ENCODE measurements at regions of chr2 and their contacts with region 1.

Region 1: DNA sequence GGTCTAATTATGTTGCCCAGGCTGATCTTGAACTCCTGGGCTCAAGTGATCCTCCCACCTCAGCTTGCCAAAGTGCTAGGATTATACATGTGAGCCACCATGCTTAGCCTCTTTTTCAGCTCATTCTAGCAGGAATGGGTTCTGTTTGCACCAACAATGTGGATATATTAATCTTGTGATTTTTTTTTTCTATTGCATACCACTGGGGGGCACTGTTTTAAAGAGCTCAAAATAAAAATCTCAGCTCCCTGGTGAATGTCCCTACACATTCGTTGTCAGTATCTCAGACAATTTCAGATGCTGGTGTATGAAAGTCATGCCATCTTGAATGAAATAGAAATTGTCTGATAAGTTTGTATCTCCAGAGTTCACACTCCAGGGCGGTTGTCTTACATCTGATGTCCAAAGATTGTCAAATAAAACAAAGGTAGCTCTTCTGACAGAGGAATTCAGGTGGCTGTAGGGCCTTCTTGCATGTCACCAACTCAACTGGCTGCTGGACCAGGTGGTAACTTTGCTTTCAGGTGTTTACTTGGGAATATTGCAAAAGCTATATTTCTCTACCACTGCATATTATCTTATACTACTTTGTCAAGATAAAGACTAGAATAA is 3.1 kb upstream of the MATN3 start:
- DNase-seq: no peak
- H3K4me3 ChIP-seq: no peak overlapping the region
- H3K27ac ChIP-seq: no peak overlapping the region
- H3K4me1 ChIP-seq: peaks cover 0 to 13% (median 7%) of the 10 kb centered on the region in 4 experiments; a peak in 3 of 7 replicates
- H3K27me3 ChIP-seq: peaks cover 0 to 23% (median 14%) of the 10 kb centered on the region in 4 experiments; a peak in 6 of 7 replicates
- CTCF ChIP-seq: peak in 2 of 3 experiments; percentile 39 to 44; a peak in 2 of 4 replicates
- EP300 ChIP-seq: no peak
- POLR2A ChIP-seq: no peak
- RAD21 ChIP-seq: peak; percentile 37 to 52

Region 2: DNA sequence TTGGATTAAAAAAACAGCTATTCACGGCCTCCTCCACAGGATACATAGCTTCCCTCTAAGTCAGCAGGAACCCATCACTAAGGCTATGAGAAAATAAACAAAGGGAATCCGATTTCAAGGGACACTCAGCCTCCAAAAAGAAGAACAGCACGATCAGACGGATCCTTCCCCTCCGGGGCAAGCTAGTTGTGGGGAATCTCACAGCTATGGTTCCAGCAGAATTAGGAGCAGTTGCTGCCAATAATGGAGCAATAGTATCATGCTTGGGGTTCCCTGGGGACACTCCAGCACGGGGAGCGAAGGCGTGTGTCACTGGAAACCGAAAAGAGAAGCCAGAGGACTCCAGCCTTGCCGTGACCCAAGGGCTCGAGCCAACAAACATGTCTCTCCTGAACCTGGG is 276.9 kb before region 1 on chr2:
- CTCF ChIA-PET with region 1: no interaction called
- POLR2A ChIA-PET with region 1: no interaction called
- DNase-seq: no peak
- H3K4me3 ChIP-seq: no peak overlapping the region
- H3K27ac ChIP-seq: no peak overlapping the region
- H3K4me1 ChIP-seq: no peaks in the 10 kb centered on the region
- H3K27me3 ChIP-seq: no peaks in the 10 kb centered on the region
- CTCF ChIP-seq: no peak
- EP300 ChIP-seq: no peak
- POLR2A ChIP-seq: no peak
- RAD21 ChIP-seq: no peak

Region 3: DNA sequence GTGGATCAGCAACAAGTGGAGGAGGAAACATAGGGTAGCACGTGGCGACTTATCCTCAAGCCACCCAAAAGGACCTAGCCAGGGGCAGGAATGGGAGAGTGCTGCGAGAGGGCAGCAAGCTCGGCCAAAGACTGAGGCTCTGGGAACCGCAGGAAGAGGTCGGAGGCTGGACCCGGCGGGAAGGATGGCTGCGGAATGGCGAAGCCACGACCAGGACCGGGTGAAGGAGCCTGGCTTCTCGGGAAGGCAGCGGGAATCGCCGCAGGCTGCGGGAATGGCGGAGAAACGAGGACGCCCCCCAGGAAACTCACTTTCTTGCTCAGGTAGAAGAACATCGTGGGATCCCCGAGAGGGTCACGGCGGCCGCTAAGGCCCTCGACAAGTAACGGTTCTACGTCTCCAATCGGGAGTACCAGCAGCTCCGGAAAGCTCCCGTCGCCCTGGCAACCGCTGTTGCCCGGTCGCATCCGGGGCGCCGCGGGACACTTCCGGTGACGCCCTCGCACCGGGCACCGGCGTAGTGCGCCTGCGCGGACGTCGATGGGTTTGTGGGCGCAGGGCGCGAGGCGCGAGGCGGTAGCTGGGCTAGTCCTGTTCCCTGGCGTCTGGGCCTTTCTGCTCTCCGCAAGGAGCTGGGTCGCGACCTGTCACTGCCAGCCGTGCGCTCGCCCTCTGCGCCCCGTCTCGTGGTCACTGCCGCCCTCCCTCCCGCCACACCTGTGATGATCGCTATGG is 25.7 kb before region 1 on chr2 and contains the start of gene WDR35:
- CTCF ChIA-PET with region 1: interaction called, 19 read pairs
- POLR2A ChIA-PET with region 1: interaction called, 7 read pairs
- DNase-seq: peak; percentile 75 to 99
- H3K4me3 ChIP-seq: peak within 1 kb of the TSS; percentile 79 to 94 (median 85)
- H3K27ac ChIP-seq: peak within 1 kb of the TSS; percentile 56; the same call in 1 of the 2 replicates
- H3K4me1 ChIP-seq: peaks cover 0 to 2% (median under 1%) of the 10 kb centered on the region in 4 experiments; a peak in 3 of 7 replicates
- H3K27me3 ChIP-seq: no peaks in the 10 kb centered on the region
- CTCF ChIP-seq: no peak
- EP300 ChIP-seq: 0 out of 3 replicates have a peak, but pooled peaks of 1 of the 2 experiments have one; percentile 81
- POLR2A ChIP-seq: peak; percentile 70 to 87
- RAD21 ChIP-seq: 0 out of 4 replicates have a peak, but pooled peaks of 1 of the 2 experiments have one; percentile 1
- total RNA-seq, gene WDR35: 22.6 and 25.5 TPM in 2 replicates

Region 4: GRCh38 chr2:20027705-20028434 is 12.3 kb after region 1 on chr2:
- CTCF ChIA-PET with region 1: interaction called, 51 read pairs
- POLR2A ChIA-PET with region 1: interaction called, 5 read pairs
- DNase-seq: no peak
- H3K4me3 ChIP-seq: no peak overlapping the region
- H3K27ac ChIP-seq: no peak overlapping the region
- H3K4me1 ChIP-seq: no peaks in the 10 kb centered on the region
- H3K27me3 ChIP-seq: no peaks in the 10 kb centered on the region
- CTCF ChIP-seq: no peak
- EP300 ChIP-seq: no peak
- POLR2A ChIP-seq: no peak
- RAD21 ChIP-seq: no peak

Region 5: DNA sequence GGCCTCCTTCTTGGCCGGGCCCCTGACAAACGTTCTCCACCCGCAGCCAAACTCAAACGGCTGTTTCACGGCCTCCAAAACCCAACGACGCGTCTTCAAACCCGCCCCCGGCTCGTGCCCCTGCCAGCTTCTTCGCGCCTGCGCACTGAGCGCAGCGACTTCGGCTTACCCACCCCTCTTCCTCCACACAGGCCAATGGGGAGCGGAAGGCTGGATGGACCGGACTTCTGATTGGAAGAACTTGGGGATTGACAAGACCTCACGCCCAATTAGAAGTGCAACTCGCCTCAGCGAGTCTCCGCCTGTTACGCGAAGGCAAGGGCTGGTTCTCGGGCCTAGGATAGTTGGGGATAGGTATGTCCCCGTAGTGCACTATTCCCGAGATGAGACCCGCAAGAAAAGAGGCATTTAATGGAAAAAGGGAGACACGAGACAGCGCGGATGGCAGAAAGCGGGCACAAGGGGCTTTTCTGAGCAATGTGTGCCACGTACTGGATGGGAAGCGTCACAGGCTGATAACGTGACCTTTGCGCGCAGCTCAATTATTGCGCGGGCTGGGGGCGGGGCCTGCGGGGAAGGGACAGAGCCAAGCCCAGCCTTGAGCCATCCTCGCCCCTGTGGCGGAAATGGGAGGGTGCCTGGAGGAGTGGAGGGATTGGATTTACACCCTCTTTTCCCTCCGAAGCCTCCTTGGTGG is 36.1 kb after region 1 on chr2 and contains the start of gene LAPTM4A:
- CTCF ChIA-PET with region 1: interaction called, 57 read pairs
- POLR2A ChIA-PET with region 1: interaction called, 4 read pairs
- DNase-seq: peak; percentile 96 to 99
- H3K4me3 ChIP-seq: peak within 1 kb of the TSS; percentile 85 to 88 (median 86)
- H3K27ac ChIP-seq: peak within 1 kb of the TSS; percentile 94
- H3K4me1 ChIP-seq: peaks cover 0 to 5% (median 0%) of the 10 kb centered on the region in 4 experiments; a peak in 3 of 7 replicates
- H3K27me3 ChIP-seq: no peaks in the 10 kb centered on the region
- CTCF ChIP-seq: no peak
- EP300 ChIP-seq: no peak
- POLR2A ChIP-seq: peak; percentile 78 to 79
- RAD21 ChIP-seq: peak; percentile 1 to 3; a peak in 1 of 4 replicates
- total RNA-seq, gene LAPTM4A: 187 and 193 TPM in 2 replicates

Region 6: DNA sequence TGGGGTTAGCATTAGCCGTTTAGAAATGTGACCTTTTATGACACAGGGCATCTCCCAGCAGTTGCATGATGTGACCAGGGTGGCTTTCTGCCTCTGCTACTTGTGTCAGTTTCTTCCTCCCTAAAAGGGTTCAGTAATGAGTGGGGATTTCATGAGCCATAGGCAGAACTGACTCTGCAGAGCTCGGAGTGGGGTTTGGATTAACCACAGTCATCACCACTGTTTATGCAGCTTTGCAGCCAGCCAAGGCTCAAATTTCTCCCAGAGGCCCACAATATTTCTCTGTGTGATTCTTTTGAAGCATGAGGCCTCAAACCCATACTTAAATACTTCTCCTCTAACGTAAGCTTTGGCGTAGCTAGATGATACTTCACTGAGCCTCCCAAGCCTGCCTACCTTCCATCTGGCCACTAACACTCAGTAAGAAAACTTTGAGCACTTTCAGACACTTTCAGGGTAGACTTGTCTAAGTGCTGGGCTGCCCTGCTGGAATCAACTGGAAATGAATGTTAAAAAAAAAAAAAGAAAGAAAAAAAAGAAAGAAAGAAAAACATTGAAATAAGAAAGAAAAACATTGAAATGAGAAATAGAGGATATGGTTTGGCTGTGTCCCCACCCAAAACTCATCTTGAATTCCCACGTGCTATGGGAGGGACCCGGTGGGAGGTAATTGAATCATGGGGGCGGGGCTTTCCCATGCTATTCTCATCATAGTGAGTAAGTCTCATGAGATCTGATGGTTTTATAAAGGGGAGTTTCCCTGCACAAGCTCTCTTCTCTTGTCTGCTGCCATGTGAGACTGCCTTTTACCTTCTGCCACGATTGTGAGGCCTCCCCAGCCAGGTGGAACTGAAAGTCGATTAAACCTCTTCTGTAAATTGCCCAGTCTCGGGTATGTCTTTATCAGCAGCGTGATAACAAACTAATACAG is 47.3 kb after region 1 on chr2:
- CTCF ChIA-PET with region 1: interaction called, 19 read pairs
- POLR2A ChIA-PET with region 1: no interaction called
- DNase-seq: no peak
- H3K4me3 ChIP-seq: no peak overlapping the region
- H3K27ac ChIP-seq: no peak overlapping the region
- H3K4me1 ChIP-seq: no peaks in the 10 kb centered on the region
- H3K27me3 ChIP-seq: no peaks in the 10 kb centered on the region
- CTCF ChIP-seq: no peak
- EP300 ChIP-seq: no peak
- POLR2A ChIP-seq: no peak
- RAD21 ChIP-seq: no peak

Region 7: DNA sequence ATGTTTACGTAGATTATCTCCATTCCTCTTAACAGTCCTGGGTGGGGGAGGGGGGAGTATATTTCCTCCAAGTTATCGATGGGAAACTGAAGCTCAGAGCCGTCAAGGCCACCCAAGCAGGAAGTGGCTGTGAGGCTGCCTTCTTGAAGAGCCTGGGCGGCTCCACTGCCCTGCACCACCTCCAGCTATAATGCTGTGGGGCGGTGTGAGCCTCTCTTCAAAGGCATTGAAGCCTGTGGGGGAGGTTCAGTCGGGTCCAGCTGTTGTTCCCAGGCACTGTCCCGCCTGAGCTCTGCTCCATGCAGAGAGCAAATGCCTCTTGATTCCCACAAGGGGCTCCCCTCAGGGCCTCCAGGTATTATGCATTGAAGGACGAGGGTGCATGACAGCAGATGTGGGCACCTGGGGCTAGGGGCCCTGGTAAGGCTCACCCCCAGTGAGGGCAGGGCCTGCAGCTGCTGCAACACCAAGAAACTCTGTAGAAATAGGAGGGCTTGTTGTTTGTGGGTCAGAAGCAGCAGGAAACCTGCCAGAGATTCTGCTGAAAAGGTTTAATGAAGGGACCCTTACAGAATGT is 65.3 kb after region 1 on chr2:
- CTCF ChIA-PET with region 1: interaction called, 24 read pairs
- POLR2A ChIA-PET with region 1: interaction called, 3 read pairs
- DNase-seq: no peak
- H3K4me3 ChIP-seq: peak overlapping the region in 1 of 4 experiments; percentile 7; a peak in 2 of 8 replicates
- H3K27ac ChIP-seq: no peak overlapping the region
- H3K4me1 ChIP-seq: peaks cover 4 to 9% (median 6%) of the 10 kb centered on the region in 4 experiments; a peak in 6 of 7 replicates
- H3K27me3 ChIP-seq: no peaks in the 10 kb centered on the region
- CTCF ChIP-seq: no peak
- EP300 ChIP-seq: no peak
- POLR2A ChIP-seq: no peak
- RAD21 ChIP-seq: no peak

Region 8: DNA sequence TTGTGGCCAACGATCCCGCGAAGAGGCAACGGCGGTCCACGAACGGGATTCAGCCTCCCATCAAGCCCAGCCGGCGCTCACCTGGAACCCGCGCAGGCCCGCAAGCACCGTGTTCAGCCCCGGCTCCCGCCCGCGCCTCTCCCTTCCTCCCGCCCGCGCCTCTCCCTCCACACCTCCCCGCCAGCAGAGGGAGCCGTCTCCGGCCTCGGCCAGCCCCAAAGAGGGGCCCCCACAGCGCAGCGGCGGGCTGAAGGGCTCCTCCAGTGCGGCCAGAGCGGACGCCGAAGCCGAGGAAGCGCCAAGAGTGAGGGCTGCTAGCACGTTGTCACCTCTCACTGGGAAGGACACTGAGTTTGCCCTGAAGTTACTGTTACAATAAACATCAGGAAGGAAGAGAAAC is 91.2 kb after region 1 on chr2:
- CTCF ChIA-PET with region 1: interaction called, 10 read pairs
- POLR2A ChIA-PET with region 1: no interaction called
- DNase-seq: peak; percentile 21 to 94
- H3K4me3 ChIP-seq: peak overlapping the region in 3 of 4 experiments; percentile 27 to 48 (median 29); a peak in 5 of 8 replicates
- H3K27ac ChIP-seq: no peak overlapping the region
- H3K4me1 ChIP-seq: peaks cover 0 to 2% (median 0%) of the 10 kb centered on the region in 4 experiments; a peak in 1 of 7 replicates
- H3K27me3 ChIP-seq: peaks cover 0 to 5% (median 3%) of the 10 kb centered on the region in 4 experiments; a peak in 3 of 7 replicates
- CTCF ChIP-seq: peak; percentile 72 to 83 (median 73)
- EP300 ChIP-seq: no peak
- POLR2A ChIP-seq: no peak
- RAD21 ChIP-seq: peak; percentile 65 to 77

Region 9: GRCh38 chr2:20421988-20422370 is 406.4 kb after region 1 on chr2:
- CTCF ChIA-PET with region 1: no interaction called
- POLR2A ChIA-PET with region 1: no interaction called
- DNase-seq: no peak
- H3K4me3 ChIP-seq: no peak overlapping the region
- H3K27ac ChIP-seq: no peak overlapping the region
- H3K4me1 ChIP-seq: peaks cover 0 to 4% (median under 1%) of the 10 kb centered on the region in 4 experiments; a peak in 2 of 7 replicates
- H3K27me3 ChIP-seq: no peaks in the 10 kb centered on the region
- CTCF ChIP-seq: no peak
- EP300 ChIP-seq: no peak
- POLR2A ChIP-seq: no peak
- RAD21 ChIP-seq: no peak